Naive thymus-derived CD4-positive, alpha-beta T cell (primary cell): ENCODE measurements at regions of chr16 and their contacts with region 1.

Region 1: GRCh38 chr16:89534252-89534756 is 26.1 kb downstream of the SPG7 start:
- DNase-seq: peak in 7 of 9 donors; percentile 60 to 80 (median 74)
- ATAC-seq: peak; percentile 96
- H3K4me3 ChIP-seq: peak overlapping the region; percentile 5
- H3K4me3 Mint-ChIP-seq: peak overlapping the region; percentile 57 to 83 (median 72)
- H3K27ac ChIP-seq: peak overlapping the region; percentile 49
- H3K27ac Mint-ChIP-seq: peak overlapping the region; percentile 91 to 100 (median 94)
- H3K4me1 ChIP-seq: peaks cover 9 to 22% of the 10 kb centered on the region in 2 donors
- H3K4me1 Mint-ChIP-seq: peaks cover 17 to 27% (median 24%) of the 10 kb centered on the region in 7 donors
- H3K27me3 ChIP-seq: no peaks in the 10 kb centered on the region
- H3K27me3 Mint-ChIP-seq: no peaks in the 10 kb centered on the region

Region 2: GRCh38 chr16:88585269-88585668 is 949.0 kb before region 1 on chr16:
- CTCF ChIA-PET with region 1: no interaction called
- POLR2A ChIA-PET with region 1: no interaction called
- intact Hi-C with region 1: no loop called
- DNase-seq: no peak
- ATAC-seq: no peak
- H3K4me3 ChIP-seq: no peak overlapping the region
- H3K4me3 Mint-ChIP-seq: no peak overlapping the region
- H3K27ac ChIP-seq: no peak overlapping the region
- H3K27ac Mint-ChIP-seq: peak overlapping the region in 3 of 9 donors; percentile 38 to 68 (median 56)
- H3K4me1 ChIP-seq: peaks cover 0 to 4% of the 10 kb centered on the region in 2 donors
- H3K4me1 Mint-ChIP-seq: peaks cover 29 to 49% (median 37%) of the 10 kb centered on the region in 7 donors
- H3K27me3 ChIP-seq: no peaks in the 10 kb centered on the region
- H3K27me3 Mint-ChIP-seq: no peaks in the 10 kb centered on the region

Region 3: DNA sequence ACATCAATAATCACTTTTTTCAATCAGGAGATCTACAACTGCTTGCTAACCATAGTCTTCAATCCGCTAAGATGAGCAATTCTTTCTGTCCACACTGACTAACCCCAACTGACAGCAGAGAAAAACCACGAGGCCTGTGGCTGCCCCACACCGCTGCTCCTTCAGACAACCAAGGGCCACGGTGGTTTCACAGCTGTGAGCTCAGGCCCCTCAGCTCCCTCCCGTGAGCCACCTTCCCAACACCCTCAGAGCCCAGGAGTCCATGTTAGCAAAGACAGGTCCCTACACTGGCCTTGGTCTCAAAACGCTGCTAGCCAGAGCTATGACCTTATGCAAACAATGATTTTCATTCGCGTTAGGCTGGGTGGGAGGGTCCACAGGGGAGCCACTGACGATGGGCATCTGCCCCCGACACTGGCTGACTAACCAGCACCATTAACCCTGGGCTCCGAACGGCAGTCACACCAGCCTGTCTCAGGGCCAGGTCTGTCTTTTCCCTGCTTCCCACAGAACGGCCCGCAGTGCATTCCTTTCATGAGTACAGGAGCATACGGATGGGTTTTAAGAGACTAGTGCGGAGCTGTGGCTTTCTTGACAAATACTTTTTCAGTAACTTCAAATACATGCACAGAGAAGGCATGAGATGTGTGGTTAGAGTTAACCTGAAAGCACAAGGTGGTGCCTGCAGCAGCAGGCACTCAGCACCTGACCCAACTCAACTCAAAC is 111.2 kb before region 1 on chr16:
- CTCF ChIA-PET with region 1: no interaction called
- POLR2A ChIA-PET with region 1: no interaction called
- intact Hi-C with region 1: loop called in 1 of 2 experiments (anchors 1 kb)
- DNase-seq: peak in 1 of 9 donors; percentile 64
- ATAC-seq: peak; percentile 79
- H3K4me3 ChIP-seq: no peak overlapping the region
- H3K4me3 Mint-ChIP-seq: peak overlapping the region; percentile 42 to 81 (median 63)
- H3K27ac ChIP-seq: peak overlapping the region; percentile 15
- H3K27ac Mint-ChIP-seq: peak overlapping the region; percentile 34 to 90 (median 77)
- H3K4me1 ChIP-seq: peaks cover 58 to 59% of the 10 kb centered on the region in 2 donors
- H3K4me1 Mint-ChIP-seq: peaks cover 70 to 91% (median 78%) of the 10 kb centered on the region in 7 donors
- H3K27me3 ChIP-seq: no peaks in the 10 kb centered on the region
- H3K27me3 Mint-ChIP-seq: no peaks in the 10 kb centered on the region

Region 4: DNA sequence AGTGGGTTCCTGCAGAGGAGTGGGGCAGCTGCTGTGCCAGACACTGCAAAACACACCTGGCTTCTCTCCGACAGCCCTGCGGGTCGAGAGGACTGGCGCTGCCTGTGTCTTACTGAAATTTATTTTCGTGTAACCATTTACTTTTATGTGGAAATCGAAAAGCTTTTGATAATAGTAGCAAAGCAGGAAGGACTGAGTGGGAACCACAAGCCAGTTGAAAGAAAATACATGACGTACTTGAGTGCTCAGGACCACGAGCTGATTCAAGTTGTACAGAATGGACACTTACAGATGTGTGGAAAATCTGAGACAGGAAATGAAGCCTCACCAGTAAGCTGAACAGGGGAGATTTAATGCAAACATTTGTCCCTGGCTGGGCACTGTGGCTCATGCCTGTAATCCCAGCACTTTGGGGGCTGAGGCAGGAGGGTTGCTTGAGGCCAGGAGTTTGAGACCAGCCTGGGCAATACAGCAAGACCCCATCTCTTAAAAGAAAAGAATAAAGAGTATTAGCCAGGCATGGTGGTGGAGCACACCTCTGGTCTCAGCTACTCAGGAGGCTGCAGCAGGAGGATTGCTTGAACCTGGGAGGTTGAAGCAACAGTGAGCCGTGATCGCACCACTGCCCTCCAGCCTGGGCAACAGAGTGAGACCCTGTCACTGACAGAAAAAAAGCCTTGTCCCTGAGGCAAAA is 14.8 kb after region 1 on chr16:
- CTCF ChIA-PET with region 1: interaction called, 3 read pairs
- POLR2A ChIA-PET with region 1: interaction called, 18 read pairs
- intact Hi-C with region 1: loop called in 1 of 2 experiments (anchors 1 kb)
- DNase-seq: peak in 7 of 9 donors; percentile 50 to 74 (median 63)
- ATAC-seq: peak; percentile 87
- H3K4me3 ChIP-seq: no peak overlapping the region
- H3K4me3 Mint-ChIP-seq: peak overlapping the region; percentile 34 to 79 (median 72)
- H3K27ac ChIP-seq: peak overlapping the region; percentile 54
- H3K27ac Mint-ChIP-seq: peak overlapping the region; percentile 73 to 97 (median 89)
- H3K4me1 ChIP-seq: peaks cover 0 to 19% of the 10 kb centered on the region in 2 donors
- H3K4me1 Mint-ChIP-seq: peaks cover 13 to 31% (median 19%) of the 10 kb centered on the region in 7 donors
- H3K27me3 ChIP-seq: no peaks in the 10 kb centered on the region
- H3K27me3 Mint-ChIP-seq: no peaks in the 10 kb centered on the region

Region 5: DNA sequence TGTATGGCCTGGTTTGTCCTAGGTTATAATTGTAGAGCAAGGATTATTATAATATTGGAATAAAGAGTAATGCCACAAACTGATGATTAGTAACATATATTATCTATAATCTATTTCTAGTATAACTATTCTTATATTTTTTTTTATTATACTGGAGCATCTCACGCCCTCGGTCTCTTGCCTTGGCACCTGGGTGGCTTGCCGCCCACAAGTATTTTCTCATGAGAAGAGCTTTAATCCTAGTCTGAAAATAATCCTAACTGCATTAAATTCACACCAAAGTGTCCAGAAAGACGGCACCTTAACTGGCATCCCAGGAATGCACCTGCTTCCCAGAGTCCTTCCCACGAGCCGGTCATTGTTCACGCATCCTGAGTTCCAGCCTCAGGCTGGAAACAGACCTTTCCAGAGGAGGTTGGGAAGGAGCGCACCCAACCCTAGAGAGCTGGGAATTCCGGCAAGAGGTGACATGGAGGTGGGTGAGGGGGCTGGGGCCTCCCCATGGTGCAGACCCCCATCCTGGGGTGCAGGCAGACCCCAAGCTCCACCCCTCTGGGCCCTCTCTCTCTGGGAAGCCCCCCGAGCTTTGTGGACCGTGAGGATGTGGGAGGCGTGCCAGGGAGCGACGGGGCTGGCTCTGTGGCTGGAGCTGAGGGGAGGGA is 107.3 kb after region 1 on chr16:
- CTCF ChIA-PET with region 1: interaction called, 5 read pairs
- POLR2A ChIA-PET with region 1: no interaction called
- intact Hi-C with region 1: loop called in 1 of 2 experiments (anchors 2 kb)
- DNase-seq: no peak
- ATAC-seq: no peak
- H3K4me3 ChIP-seq: no peak overlapping the region
- H3K4me3 Mint-ChIP-seq: peak overlapping the region in 8 of 10 donors; percentile 48 to 85 (median 74)
- H3K27ac ChIP-seq: no peak overlapping the region
- H3K27ac Mint-ChIP-seq: peak overlapping the region in 1 of 9 donors; percentile 78
- H3K4me1 ChIP-seq: no peaks in the 10 kb centered on the region
- H3K4me1 Mint-ChIP-seq: peaks cover 0 to 10% (median 7%) of the 10 kb centered on the region in 7 donors
- H3K27me3 ChIP-seq: no peaks in the 10 kb centered on the region
- H3K27me3 Mint-ChIP-seq: no peaks in the 10 kb centered on the region